Activated CD8-positive, alpha-beta T cell treated with anti-CD3 and anti-CD28 coated beads for 36 hours (primary cell): ENCODE measurements at regions of chr12 and their contacts with region 1.

Region 1: DNA sequence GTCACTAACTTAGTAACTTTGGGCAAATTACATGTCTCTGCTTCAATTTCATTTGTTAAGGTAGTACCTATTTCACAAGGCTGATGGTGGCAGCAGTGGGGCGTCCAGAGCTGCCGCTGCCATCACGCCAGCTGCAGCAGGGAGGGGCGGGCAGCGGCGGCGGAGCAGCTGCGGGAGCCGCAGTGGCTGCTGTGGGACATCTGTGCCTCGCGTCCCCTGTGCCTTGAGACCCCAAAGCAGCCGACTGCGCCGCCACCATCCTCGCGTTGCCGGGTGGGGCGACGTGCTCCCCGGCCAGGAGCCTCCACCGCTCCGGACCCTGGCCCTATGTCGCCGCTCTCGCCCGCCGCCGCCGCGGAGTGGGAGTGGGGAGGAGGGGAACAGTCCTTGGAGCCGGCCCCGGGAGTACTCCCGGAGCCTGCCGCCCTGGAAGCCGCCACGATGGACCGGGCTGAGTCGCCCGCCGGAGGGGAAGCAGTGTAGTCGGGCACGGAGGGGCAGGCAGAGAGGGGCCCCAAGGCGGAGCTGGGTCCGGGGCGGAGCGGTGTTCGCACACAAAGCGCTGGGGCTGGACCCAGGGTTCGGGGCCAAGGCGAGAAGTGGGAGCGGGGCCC is 51.4 kb downstream of the A2M start:
- DNase-seq: peak; percentile 74
- ATAC-seq: peak; percentile 95
- H3K4me3 Mint-ChIP-seq: peak overlapping the region; percentile 71
- H3K27ac Mint-ChIP-seq: no peak overlapping the region
- H3K4me1 Mint-ChIP-seq: peaks cover 9% of the 10 kb centered on the region
- H3K27me3 Mint-ChIP-seq: peaks cover 2% of the 10 kb centered on the region
- CTCF ChIP-seq: no peak

Region 2: DNA sequence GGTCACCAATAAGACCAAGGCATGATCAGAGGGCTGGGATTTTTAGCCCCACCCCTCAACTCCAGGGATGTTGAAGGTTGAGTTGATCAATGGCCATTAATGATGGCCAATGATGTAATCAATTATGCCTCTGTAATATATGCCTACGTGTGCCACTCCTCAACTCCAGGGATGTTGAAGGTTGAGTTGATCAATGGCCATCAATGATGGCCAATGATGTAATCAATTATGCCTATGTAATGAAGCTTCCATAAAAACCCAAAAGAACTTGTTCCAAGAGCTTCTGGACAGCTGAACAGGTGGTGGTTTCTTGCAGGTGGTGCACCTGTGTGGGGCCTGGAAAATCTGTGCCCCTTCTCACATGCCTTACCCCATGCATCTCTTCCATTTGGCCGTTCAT is 41.7 kb before region 1 on chr12:
- CTCF ChIA-PET with region 1: no interaction called
- POLR2A ChIA-PET with region 1: no interaction called
- intact Hi-C with region 1: no loop called
- DNase-seq: no peak
- ATAC-seq: no peak
- H3K4me3 Mint-ChIP-seq: no peak overlapping the region
- H3K27ac Mint-ChIP-seq: peak overlapping the region; percentile 21
- H3K4me1 Mint-ChIP-seq: peaks cover 20% of the 10 kb centered on the region
- H3K27me3 Mint-ChIP-seq: peaks cover under 1% of the 10 kb centered on the region
- CTCF ChIP-seq: no peak

Region 3: GRCh38 chr12:9079883-9080675 is 15.8 kb after region 1 on chr12:
- CTCF ChIA-PET with region 1: interaction called, 13 read pairs
- POLR2A ChIA-PET with region 1: no interaction called
- intact Hi-C with region 1: no loop called
- DNase-seq: no peak
- ATAC-seq: no peak
- H3K4me3 Mint-ChIP-seq: no peak overlapping the region
- H3K27ac Mint-ChIP-seq: no peak overlapping the region
- H3K4me1 Mint-ChIP-seq: no peaks in the 10 kb centered on the region
- H3K27me3 Mint-ChIP-seq: no peaks in the 10 kb centered on the region
- CTCF ChIP-seq: no peak